A673 (cell line): ENCODE measurements at regions of chr4 and their contacts with region 1.

Region 1: GRCh38 chr4:70505151-70505748 is 13.1 kb upstream of the AMTN start:
- DNase-seq: peak; percentile 46
- H3K4me3 ChIP-seq: no peak overlapping the region
- H3K27ac ChIP-seq: no peak overlapping the region
- H3K4me1 ChIP-seq: no peaks in the 10 kb centered on the region
- H3K27me3 ChIP-seq: no peaks in the 10 kb centered on the region
- CTCF ChIP-seq: peak; percentile 79

Region 2: DNA sequence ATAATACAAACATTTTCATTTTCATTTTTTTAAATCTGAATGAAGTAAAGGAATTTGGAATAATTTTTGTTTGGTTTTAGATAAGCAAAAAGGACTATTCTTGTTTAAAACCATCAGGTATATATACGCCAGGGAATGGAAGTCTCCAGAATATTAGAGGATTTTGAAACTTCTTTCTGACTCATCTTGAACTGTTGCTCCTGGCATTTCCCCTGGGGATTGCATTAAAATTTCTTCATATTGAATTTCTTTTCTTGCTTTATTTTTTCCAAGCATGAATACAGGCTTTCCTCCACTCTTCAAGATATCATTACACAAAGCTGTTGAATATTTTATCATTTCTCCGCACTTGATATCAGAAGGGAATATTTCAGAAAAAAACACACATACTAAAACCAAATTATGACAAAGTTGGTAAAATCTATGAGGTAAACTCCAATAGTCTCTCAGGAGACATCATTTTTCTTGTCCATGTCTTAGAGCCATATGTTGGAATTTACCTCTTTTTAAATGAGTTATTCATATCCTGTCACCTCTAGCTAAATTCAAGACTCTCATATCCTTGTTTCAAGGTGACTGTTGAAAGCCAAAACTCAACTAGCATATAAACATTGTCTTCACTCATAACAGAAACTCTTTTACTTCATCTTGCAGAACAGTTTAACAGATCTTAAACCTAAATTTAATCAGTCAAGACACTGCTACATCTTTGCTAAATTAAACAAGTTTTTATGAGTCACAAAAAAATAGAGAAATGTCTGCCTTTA is 595.1 kb before region 1 on chr4:
- CTCF ChIA-PET with region 1: no interaction called
- POLR2A ChIA-PET with region 1: no interaction called
- intact Hi-C with region 1: no loop called
- DNase-seq: peak; percentile 5
- H3K4me3 ChIP-seq: no peak overlapping the region
- H3K27ac ChIP-seq: no peak overlapping the region
- H3K4me1 ChIP-seq: no peaks in the 10 kb centered on the region
- H3K27me3 ChIP-seq: no peaks in the 10 kb centered on the region
- CTCF ChIP-seq: no peak

Region 3: GRCh38 chr4:70183168-70183939 is 321.9 kb before region 1 on chr4:
- CTCF ChIA-PET with region 1: no interaction called
- POLR2A ChIA-PET with region 1: no interaction called
- intact Hi-C with region 1: loop called (anchors 2 kb)
- DNase-seq: peak; percentile 46
- H3K4me3 ChIP-seq: no peak overlapping the region
- H3K27ac ChIP-seq: no peak overlapping the region
- H3K4me1 ChIP-seq: no peaks in the 10 kb centered on the region
- H3K27me3 ChIP-seq: no peaks in the 10 kb centered on the region
- CTCF ChIP-seq: peak; percentile 65

Region 4: GRCh38 chr4:70315928-70316327 is 189.3 kb before region 1 on chr4:
- CTCF ChIA-PET with region 1: no interaction called
- POLR2A ChIA-PET with region 1: no interaction called
- intact Hi-C with region 1: loop called (anchors 5 kb)
- DNase-seq: no peak
- H3K4me3 ChIP-seq: no peak overlapping the region
- H3K27ac ChIP-seq: no peak overlapping the region
- H3K4me1 ChIP-seq: no peaks in the 10 kb centered on the region
- H3K27me3 ChIP-seq: no peaks in the 10 kb centered on the region
- CTCF ChIP-seq: 0 out of 2 replicates have a peak, but pooled peaks have one; percentile 30

Region 5: GRCh38 chr4:70337886-70338420 is 167.3 kb before region 1 on chr4:
- CTCF ChIA-PET with region 1: no interaction called
- POLR2A ChIA-PET with region 1: no interaction called
- intact Hi-C with region 1: no loop called
- DNase-seq: no peak
- H3K4me3 ChIP-seq: no peak overlapping the region
- H3K27ac ChIP-seq: no peak overlapping the region
- H3K4me1 ChIP-seq: no peaks in the 10 kb centered on the region
- H3K27me3 ChIP-seq: no peaks in the 10 kb centered on the region
- CTCF ChIP-seq: no peak